ENCODE measurements at regions of chr2 and their contacts with region 1.

Region 1: GRCh38 chr2:233068762-233069418 is 8.7 kb downstream of the INPP5D start:
- DNase-seq: no peak
- H3K4me3 ChIP-seq: peak overlapping the region in 3 of 7 experiments; percentile 14 to 48 (median 20)
- H3K27ac ChIP-seq: peak overlapping the region; percentile 48 to 63
- H3K4me1 ChIP-seq: peaks cover 10 to 57% (median 37%) of the 10 kb centered on the region in 4 experiments
- H3K27me3 ChIP-seq: no peaks in the 10 kb centered on the region

Region 2: GRCh38 chr2:233084488-233084887 is 15.6 kb after region 1 on chr2:
- CTCF ChIA-PET with region 1: interaction called, 12 read pairs
- POLR2A ChIA-PET with region 1: interaction called, 5 read pairs
- DNase-seq: peak; percentile 64 to 93 (median 90)
- H3K4me3 ChIP-seq: peak overlapping the region in 5 of 7 experiments; percentile 13 to 52 (median 49)
- H3K27ac ChIP-seq: peak overlapping the region; percentile 83 to 88
- H3K4me1 ChIP-seq: peaks cover 52 to 96% (median 88%) of the 10 kb centered on the region in 4 experiments
- H3K27me3 ChIP-seq: no peaks in the 10 kb centered on the region